ENCODE measurements at regions of chr7 and their contacts with region 1.

Region 1: GRCh38 chr7:92134271-92135051 is at the start of gene CYP51A1:
- DNase-seq: peak; percentile 96
- H3K4me3 ChIP-seq: peak within 1 kb of the TSS; percentile 83 to 98
- H3K27ac ChIP-seq: peak within 1 kb of the TSS; percentile 97 to 99
- H3K4me1 ChIP-seq: peaks cover 6% of the 10 kb centered on the region
- H3K27me3 ChIP-seq: no peaks in the 10 kb centered on the region
- CTCF ChIP-seq: peak in 2 of 4 experiments; percentile 5 to 25
- POLR2A ChIP-seq: peak; percentile 91
- total RNA-seq, gene CYP51A1: 51.6 to 121 TPM

Region 2: GRCh38 chr7:91880413-91881241 is 253.8 kb before region 1 on chr7 and contains the start of gene MTERF1:
- intact Hi-C with region 1: no loop called
- DNase-seq: peak; percentile 87
- H3K4me3 ChIP-seq: peak within 1 kb of the TSS; percentile 48 to 70
- H3K27ac ChIP-seq: peak within 1 kb of the TSS; percentile 56 to 62
- H3K4me1 ChIP-seq: no peaks in the 10 kb centered on the region
- H3K27me3 ChIP-seq: no peaks in the 10 kb centered on the region
- CTCF ChIP-seq: peak; percentile 90 to 99 (median 98)
- POLR2A ChIP-seq: no peak
- total RNA-seq, gene MTERF1: 6.1 to 8.1 TPM

Region 3: DNA sequence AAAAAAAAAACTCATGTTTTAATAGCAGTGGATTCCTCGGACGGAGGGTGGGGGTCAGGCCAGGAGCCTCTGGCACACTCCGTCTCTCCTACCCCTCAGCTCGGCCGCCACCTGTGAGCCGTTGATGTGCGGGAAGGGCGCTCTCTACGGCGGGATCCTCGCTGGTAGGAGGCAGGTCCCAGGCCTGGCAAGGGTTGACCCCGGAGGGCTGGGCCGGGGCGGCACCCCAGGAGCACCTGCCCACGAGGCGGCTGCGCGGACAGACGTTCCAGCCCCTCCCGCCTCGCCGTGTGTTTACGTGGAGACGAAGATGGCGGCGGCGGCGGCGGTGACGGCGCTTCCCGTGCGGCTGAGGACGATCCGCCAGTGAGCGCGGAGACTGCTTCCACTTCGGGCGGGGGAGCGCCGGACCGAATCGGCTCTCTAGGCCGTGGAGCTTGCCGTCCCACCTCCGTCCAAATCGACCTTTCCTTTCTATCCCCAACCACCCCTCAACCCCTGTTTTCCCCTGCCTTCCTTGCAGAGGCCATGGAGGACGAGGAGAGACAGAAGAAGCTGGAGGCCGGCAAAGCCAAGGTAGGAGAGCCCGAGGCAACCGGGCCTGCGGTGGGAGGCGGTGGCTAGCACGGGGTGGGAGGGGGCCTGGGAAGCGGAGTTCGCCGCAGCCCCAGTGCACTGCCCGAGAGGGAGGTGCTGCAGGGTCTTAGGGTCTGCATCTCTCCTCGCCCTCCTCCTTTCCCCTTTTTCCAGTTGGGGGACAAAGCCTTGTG is 193.7 kb before region 1 on chr7 and contains the start of gene AKAP9:
- intact Hi-C with region 1: loop called (anchors 2 kb)
- DNase-seq: peak; percentile 92
- H3K4me3 ChIP-seq: peak within 1 kb of the TSS; percentile 65 to 67
- H3K27ac ChIP-seq: peak within 1 kb of the TSS; percentile 92 to 93
- H3K4me1 ChIP-seq: no peaks in the 10 kb centered on the region
- H3K27me3 ChIP-seq: no peaks in the 10 kb centered on the region
- CTCF ChIP-seq: no peak
- POLR2A ChIP-seq: peak; percentile 93
- total RNA-seq, gene AKAP9: 61.8 to 80.1 TPM

Region 4: GRCh38 chr7:91973639-91974038 is 160.8 kb before region 1 on chr7:
- intact Hi-C with region 1: no loop called
- DNase-seq: no peak
- H3K4me3 ChIP-seq: no peak overlapping the region
- H3K27ac ChIP-seq: no peak overlapping the region
- H3K4me1 ChIP-seq: no peaks in the 10 kb centered on the region
- H3K27me3 ChIP-seq: no peaks in the 10 kb centered on the region
- CTCF ChIP-seq: no peak
- POLR2A ChIP-seq: no peak

Region 5: DNA sequence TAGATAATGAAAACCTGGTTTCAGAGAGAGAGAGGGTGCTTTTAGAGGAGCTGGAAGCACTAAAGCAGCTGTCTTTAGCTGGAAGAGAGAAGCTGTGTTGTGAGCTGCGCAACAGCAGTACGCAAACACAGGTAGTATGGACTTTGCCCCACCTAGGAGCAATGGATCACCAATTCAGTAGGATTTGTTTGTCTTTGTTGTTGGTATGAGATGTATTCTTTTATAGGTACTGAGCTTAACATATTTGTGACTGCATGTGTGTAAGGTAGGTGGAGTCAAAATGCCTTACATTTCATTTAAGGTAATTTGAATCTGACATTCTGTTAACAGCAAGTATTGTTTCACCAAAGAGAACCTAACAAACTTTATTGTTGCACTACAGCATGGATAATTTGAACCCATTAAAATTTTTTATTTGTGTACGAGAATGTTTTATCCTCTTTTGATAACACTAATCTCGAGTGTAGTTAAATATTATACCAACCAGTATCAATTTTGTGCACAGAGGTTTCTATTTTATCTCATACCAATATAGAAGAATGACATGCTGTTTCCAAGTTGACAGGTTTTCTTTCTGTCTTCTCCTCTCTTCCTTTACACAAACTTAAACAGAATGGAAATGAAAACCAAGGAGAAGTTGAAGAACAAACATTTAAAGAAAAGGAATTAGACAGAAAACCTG is 92.3 kb before region 1 on chr7:
- intact Hi-C with region 1: loop called (anchors 5 kb)
- DNase-seq: no peak
- H3K4me3 ChIP-seq: no peak overlapping the region
- H3K27ac ChIP-seq: no peak overlapping the region
- H3K4me1 ChIP-seq: no peaks in the 10 kb centered on the region
- H3K27me3 ChIP-seq: no peaks in the 10 kb centered on the region
- CTCF ChIP-seq: no peak
- POLR2A ChIP-seq: no peak

Measured in prostate gland (tissue), 2 donors.